ENCODE measurements at regions of chr1 and their contacts with region 1.

Region 1: GRCh38 chr1:77832901-77833300 is 53.5 kb downstream of the MIGA1 start:
- DNase-seq: no peak
- ATAC-seq: peak; percentile 79 to 94 (median 84)
- H3K4me3 ChIP-seq: peak overlapping the region in 1 of 10 donors; percentile 1
- H3K27ac ChIP-seq: peak overlapping the region; percentile 73 to 97 (median 88)
- H3K4me1 ChIP-seq: peaks cover 3 to 69% (median 52%) of the 10 kb centered on the region in 9 donors
- H3K27me3 ChIP-seq: no peaks in the 10 kb centered on the region
- CTCF ChIP-seq: no peak

Region 2: DNA sequence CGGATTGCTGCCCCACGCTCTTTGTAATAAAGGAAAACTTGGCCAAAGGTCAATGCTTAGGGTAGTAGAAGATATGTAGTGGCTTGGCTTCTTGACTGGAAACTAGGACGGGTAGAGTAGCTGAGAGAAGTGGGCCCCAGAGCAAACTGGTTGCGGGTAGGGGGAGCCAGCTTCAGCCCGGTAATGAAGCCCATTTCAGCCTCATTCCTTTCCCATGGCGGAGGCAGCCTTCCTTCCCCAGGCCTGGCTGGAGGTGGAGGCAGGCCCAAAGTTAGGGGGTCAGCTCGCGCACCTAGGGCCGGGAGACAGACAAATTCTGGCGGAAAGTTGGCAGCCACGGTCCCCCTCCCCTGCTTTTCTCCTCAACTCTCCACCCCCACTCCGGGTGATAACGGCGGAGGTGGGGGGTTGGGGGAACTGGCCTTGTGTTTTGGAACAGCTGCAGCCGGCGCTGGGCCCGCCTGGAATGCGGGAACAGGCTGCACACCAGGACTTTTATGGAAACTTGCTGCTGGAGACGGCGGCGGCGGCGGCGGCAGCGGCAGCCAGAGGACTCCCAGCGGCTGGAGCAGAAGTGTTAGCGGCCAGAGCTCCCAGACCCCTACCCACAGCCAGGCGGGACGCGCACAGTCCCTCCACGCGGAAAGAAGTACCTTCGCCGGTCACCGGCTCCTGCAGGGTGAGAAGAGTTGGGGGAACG is 55.3 kb after region 1 on chr1 and contains the start of gene NEXN:
- intact Hi-C with region 1: loop called (anchors 1 to 10 kb)
- DNase-seq: peak; percentile 83 to 84
- ATAC-seq: peak; percentile 85 to 93 (median 92)
- H3K4me3 ChIP-seq: peak within 1 kb of the TSS; percentile 49 to 91 (median 72)
- H3K27ac ChIP-seq: peak within 1 kb of the TSS; percentile 86 to 99 (median 98)
- H3K4me1 ChIP-seq: peaks cover 0 to 11% (median 3%) of the 10 kb centered on the region in 9 donors
- H3K27me3 ChIP-seq: peaks cover 0 to 14% (median 0%) of the 10 kb centered on the region in 7 donors
- CTCF ChIP-seq: peak in 1 of 9 donors; percentile 13
- total RNA-seq, gene NEXN: 248 to 479 (median 396) TPM

Region 3: DNA sequence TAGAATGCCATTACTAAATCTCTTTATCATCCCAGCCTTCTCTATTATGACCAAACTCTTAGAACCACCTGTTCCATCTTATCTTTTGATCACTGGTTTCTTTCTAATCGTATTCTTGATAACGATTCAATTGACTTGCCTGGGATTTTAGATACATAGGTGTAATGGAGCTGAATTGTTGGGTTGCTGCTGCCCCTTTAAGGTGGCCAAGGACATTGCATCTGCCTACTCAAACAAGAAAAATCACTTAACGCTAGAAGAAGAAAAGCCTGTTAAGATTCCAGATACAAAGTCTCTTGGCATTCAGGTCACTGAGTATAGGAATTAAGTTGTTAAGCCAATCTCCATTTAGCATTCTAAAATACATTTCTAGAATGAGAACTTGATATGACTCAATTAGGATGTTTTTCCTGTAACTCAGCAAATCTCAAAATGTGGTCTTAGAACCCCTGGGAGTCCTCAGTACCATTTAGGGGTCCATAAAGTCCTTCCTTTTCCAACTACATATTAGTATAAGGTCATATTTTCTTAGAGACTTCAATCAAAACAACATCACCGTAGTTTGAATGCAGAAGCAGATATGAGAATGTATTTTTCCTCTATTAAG is 67.9 kb after region 1 on chr1:
- intact Hi-C with region 1: loop called in 2 of 10 experiments (anchors 5 kb)
- DNase-seq: no peak
- ATAC-seq: peak in 7 of 8 donors; percentile 62 to 75 (median 70)
- H3K4me3 ChIP-seq: peak overlapping the region in 5 of 10 donors; percentile 14 to 28 (median 23)
- H3K27ac ChIP-seq: peak overlapping the region in 7 of 10 donors; percentile 44 to 73 (median 62)
- H3K4me1 ChIP-seq: peaks cover 0 to 29% (median 7%) of the 10 kb centered on the region in 9 donors
- H3K27me3 ChIP-seq: no peaks in the 10 kb centered on the region
- CTCF ChIP-seq: peak in 8 of 9 donors; percentile 35 to 71 (median 57)